Prostate gland (tissue), 2 donors: ENCODE measurements at regions of chr13 and their contacts with region 1.

Region 1: GRCh38 chr13:30865123-30866049 is 40.7 kb upstream of the MEDAG start:
- DNase-seq: peak; percentile 81
- H3K4me3 ChIP-seq: no peak overlapping the region
- H3K27ac ChIP-seq: peak overlapping the region; percentile 66 to 75
- H3K4me1 ChIP-seq: peaks cover 2% of the 10 kb centered on the region
- H3K27me3 ChIP-seq: no peaks in the 10 kb centered on the region
- CTCF ChIP-seq: peak; percentile 63 to 94 (median 79)
- POLR2A ChIP-seq: peak; percentile 9

Region 2: GRCh38 chr13:30257468-30258099 is 607.8 kb before region 1 on chr13:
- intact Hi-C with region 1: loop called (anchors 10 kb)
- DNase-seq: no peak
- H3K4me3 ChIP-seq: no peak overlapping the region
- H3K27ac ChIP-seq: peak overlapping the region; percentile 27 to 29
- H3K4me1 ChIP-seq: peaks cover 4% of the 10 kb centered on the region
- H3K27me3 ChIP-seq: no peaks in the 10 kb centered on the region
- CTCF ChIP-seq: no peak
- POLR2A ChIP-seq: no peak

Region 3: DNA sequence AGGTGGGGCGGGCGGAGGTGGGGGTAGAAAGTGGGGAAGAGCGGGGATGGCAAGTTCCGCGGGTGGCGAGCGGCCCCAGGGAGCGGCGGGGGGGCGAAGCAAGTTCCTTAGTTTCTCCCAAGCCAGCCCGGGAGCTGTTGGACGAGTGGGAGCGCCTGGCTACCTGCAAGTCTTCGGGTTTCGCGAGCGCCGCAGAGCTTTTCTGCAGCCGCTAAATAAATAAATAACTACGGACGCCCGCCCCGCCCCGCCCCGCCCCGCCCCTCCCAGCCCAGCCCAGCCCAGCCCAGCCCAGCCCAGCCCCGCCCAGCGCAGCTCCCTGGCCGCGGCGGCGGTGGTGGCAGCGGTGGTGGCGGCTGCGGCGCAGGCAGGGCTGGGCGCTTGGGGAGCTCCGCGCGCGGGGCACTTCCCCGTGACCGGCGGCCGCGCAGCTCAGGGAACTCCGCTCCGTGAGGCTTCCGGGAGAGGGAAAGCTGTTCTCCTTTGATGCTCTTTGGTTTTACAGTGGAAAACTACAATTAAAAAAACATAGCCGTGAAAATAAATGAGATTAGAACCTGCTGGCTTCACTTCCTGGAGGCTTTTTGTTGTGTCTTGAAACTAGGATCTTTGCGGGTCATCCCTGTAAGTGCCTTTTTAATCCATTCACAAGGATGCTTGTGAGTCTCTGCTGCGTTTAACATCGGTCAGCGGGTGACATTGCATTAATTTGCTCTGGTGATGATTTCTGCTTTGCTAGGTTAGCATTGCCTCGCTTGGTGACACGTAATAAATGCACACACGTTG is 443.1 kb before region 1 on chr13 and contains the start of gene UBE2L5:
- intact Hi-C with region 1: loop called (anchors 10 kb)
- DNase-seq: peak; percentile 82
- H3K4me3 ChIP-seq: peak within 1 kb of the TSS; percentile 41 to 54
- H3K27ac ChIP-seq: peak within 1 kb of the TSS; percentile 96 to 98
- H3K4me1 ChIP-seq: no peaks in the 10 kb centered on the region
- H3K27me3 ChIP-seq: no peaks in the 10 kb centered on the region
- CTCF ChIP-seq: no peak
- POLR2A ChIP-seq: peak; percentile 79
- total RNA-seq, gene UBE2L5: 0.18 to 5.2 TPM

Region 4: DNA sequence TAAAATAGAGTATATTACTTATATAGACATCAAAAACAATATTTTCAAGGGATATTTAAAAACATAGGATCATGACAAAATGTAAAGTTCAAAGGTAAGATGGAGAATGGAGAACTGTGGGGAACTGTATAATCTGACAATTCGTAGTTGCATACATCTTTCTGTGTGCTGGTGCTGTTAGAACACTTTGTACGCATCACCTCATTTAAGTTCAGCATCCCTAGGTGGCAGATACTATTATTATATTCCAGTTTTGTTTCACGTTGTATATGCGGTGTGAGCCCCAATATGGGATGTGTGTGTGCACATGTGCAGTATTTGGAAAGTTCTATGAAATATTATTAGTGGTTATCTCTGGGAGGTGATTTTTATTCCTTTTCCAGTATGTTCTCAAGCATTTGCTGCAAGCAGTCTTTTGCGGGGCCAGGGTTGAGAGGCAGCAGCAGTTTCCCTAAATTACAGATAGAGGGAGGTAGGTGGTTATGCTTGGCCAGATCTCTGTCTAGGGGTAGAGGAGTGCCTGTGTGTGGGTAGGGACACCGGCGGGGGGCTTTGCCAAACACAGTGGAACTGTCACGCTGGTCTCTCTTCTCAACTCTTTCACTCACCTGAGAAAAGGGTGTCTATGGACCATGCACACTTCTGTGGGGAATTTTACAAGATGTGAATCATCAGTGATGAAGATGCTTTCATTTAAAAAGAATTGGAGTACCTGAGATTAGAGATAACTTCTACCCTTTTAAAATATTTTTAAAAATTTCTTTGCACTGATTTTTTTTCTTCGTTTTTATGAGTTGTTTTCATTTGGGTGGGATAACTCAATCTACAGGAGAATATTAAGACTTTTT is 185.7 kb before region 1 on chr13:
- intact Hi-C with region 1: loop called (anchors 5 kb)
- DNase-seq: no peak
- H3K4me3 ChIP-seq: no peak overlapping the region
- H3K27ac ChIP-seq: no peak overlapping the region
- H3K4me1 ChIP-seq: no peaks in the 10 kb centered on the region
- H3K27me3 ChIP-seq: no peaks in the 10 kb centered on the region
- CTCF ChIP-seq: peak in 3 of 4 experiments; percentile 9 to 57 (median 52)
- POLR2A ChIP-seq: no peak

Region 5: DNA sequence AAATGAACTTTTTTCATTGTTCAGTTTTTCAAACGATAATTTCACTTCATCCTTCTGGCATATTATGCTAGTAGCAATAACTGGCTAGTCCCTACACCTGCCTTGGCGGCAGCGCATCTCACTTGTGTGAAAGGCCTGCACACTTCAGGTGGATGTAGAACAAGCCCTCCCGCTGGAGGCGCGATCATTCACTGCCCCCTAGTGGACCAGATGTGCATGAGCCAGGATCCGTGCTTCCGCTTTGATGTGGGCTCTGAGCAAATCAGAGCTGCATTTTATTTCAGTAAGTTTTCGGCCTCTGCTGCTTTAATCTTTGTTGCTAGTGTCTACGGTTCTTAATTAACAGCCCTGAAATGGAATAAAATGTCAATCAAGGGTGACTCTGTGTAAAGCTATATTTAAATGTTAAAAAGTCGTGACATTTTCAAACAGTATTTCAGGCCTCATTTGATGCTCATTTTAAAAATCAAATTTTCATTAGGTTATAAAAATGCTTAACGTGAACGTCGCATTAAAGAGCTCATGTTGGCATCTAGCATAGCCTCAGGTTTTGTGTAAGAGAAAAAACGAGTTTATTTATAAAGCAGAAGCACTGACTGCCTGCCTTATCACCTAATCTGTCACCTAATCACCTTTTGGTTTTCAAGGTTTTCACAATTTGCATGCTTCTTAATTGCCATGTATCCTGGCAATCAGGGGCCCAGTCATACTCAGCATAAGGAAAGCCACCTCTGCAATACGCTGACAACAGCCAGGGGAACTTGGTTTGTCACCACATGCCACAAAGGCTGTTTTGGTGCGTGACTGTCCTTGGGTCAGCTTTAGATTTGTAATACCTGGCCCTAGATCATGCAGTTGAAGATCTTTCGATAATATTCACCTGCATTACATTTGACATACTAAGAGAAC is 179.2 kb after region 1 on chr13:
- intact Hi-C with region 1: loop called (anchors 5 kb)
- DNase-seq: peak; percentile 74
- H3K4me3 ChIP-seq: no peak overlapping the region
- H3K27ac ChIP-seq: no peak overlapping the region
- H3K4me1 ChIP-seq: no peaks in the 10 kb centered on the region
- H3K27me3 ChIP-seq: no peaks in the 10 kb centered on the region
- CTCF ChIP-seq: peak; percentile 82 to 89 (median 88)
- POLR2A ChIP-seq: no peak